AG04449 (cell line): ENCODE measurements at regions of chr1 and their contacts with region 1.

Region 1: GRCh38 chr1:16967095-16967575 is 13.3 kb downstream of the MFAP2 start:
- DNase-seq: no peak
- H3K4me3 ChIP-seq: no peak overlapping the region
- CTCF ChIP-seq: no peak

Region 2: DNA sequence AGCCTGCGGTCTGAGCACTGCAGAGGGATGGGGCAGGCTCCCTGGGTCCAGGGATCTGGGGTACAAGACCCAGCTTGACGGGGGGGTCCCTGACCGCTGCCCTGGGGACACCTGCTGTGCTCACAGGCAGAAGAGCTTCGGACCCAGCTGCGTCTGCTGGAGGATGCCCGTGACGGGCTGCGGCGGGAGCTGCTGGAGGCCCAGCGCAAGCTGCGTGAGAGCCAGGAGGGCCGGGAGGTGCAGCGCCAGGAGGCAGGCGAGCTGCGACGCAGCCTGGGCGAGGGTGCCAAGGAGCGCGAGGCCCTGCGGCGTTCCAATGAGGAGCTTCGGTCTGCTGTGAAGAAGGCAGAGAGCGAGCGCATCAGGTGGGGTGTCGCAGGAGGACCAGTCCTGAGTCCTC is 11.9 kb before region 1 on chr1:
- CTCF ChIA-PET with region 1: interaction called, 78 read pairs
- POLR2A ChIA-PET with region 1: interaction called, 4 read pairs
- DNase-seq: no peak
- H3K4me3 ChIP-seq: no peak overlapping the region
- CTCF ChIP-seq: no peak

Region 3: DNA sequence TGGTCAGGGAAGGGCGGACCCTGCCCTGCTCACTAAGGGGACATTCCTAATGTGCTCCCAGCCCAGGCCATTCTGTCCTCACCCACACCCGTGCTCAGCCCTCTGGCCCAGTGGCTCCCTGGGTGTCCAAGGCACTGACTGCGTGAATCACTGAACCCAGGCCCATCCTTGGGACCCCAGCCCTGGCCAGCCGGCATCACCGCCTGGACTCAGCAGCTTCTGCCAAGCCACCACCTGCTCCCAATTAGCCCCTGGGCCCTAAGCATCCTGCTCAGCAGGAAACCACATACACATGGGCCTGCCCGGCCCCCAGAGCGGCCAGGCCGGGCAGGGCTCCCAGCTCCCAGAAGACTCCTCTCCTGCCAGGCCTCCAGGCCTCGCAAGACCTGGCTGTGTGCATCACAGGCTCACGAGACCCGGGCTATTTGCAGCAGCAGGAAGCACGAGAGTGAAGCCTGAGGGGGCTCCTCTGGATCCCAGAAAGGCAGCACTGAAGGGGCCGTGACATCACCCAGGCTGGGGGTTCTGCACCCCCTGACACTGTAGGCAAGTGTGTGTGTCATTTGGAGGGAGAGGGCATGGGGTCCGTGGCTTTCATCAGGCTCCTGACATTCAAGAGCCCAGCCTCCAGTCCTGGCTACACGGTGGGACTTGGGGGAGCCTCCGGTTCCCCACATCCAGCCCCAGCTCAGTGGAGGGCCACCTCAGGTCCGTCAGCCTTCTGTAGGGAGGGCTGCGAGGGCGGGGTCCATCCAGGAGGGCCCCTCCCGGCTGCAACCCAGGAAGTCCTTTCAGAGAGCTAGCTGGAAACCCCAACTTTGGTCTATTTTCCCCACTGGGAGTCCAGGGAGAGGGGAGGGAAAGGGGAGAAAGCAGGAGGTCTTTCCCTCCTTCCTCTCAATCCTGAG is 11.7 kb after region 1 on chr1:
- CTCF ChIA-PET with region 1: interaction called, 38 read pairs
- POLR2A ChIA-PET with region 1: interaction called, 10 read pairs
- DNase-seq: peak; percentile 84
- H3K4me3 ChIP-seq: peak overlapping the region; percentile 76
- CTCF ChIP-seq: no peak

Region 4: GRCh38 chr1:16999863-17000262 is 32.7 kb after region 1 on chr1:
- CTCF ChIA-PET with region 1: no interaction called
- POLR2A ChIA-PET with region 1: no interaction called
- DNase-seq: no peak
- H3K4me3 ChIP-seq: no peak overlapping the region
- CTCF ChIP-seq: no peak

Region 5: DNA sequence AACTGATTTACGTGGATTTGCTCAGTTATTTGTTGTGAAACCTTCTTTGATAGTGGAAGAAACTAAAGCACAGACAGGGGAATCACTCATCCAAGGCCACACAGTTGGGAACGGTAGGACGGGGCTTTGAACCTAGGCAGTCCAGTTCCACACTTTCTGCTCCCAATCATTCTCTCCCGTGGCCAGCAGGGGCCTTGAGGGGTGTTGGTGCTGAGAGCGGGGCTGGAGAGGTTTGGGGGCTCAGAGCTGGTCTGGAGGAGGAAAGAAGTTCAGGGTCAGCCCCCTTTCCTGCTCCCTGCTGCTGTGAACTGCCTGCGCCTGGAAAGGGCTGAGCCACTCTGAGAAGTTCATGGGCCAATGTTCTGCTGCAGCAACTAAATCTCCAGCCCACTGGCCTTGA is 756.5 kb after region 1 on chr1:
- CTCF ChIA-PET with region 1: no interaction called
- POLR2A ChIA-PET with region 1: no interaction called
- DNase-seq: no peak
- H3K4me3 ChIP-seq: no peak overlapping the region
- CTCF ChIP-seq: peak; percentile 17